ENCODE measurements at regions of chr16 and their contacts with region 1.

Region 1: DNA sequence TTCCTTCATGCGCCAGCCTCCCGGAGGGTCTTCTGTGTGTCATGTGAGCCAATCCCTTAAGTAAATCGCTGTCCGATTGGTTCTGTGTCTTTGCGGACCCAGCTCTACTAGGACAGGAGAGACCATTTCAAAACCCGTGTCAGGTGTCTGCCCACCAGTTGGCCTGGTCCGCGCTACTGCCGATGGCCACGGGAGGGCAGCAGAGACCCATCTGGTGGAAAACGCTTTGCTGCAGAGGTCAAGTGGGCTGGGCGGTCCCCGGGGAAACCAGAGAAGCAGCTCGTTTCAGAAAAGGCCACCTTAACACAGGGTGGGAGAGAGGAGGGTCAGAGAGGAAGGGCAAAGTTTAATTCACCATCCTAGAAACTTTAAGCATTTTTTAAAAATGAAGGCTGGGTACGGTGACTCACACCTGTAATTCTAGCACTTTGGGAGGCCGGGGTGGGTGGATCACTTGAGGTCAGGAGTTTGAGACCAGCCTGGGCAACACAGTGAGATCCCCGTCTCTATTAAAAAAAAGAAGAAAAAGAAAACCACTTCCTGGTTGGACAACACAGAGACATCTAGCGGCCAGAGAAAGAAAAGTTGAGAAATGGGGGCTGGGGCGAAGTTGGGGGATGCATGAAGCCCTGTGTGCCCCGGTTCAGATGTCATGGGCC is 2.8 kb upstream of the CIBAR2 start:
- DNase-seq: peak; percentile 93
- H3K4me3 ChIP-seq: peak overlapping the region in 2 of 4 donors; percentile 27 to 44
- H3K27ac ChIP-seq: peak overlapping the region; percentile 49 to 75 (median 62)
- H3K4me1 ChIP-seq: peaks cover 3 to 8% (median 8%) of the 10 kb centered on the region in 4 donors
- H3K27me3 ChIP-seq: no peaks in the 10 kb centered on the region
- CTCF ChIP-seq: peak; percentile 95 to 98 (median 96)
- EP300 ChIP-seq: no peak
- POLR2A ChIP-seq: no peak

Region 2: DNA sequence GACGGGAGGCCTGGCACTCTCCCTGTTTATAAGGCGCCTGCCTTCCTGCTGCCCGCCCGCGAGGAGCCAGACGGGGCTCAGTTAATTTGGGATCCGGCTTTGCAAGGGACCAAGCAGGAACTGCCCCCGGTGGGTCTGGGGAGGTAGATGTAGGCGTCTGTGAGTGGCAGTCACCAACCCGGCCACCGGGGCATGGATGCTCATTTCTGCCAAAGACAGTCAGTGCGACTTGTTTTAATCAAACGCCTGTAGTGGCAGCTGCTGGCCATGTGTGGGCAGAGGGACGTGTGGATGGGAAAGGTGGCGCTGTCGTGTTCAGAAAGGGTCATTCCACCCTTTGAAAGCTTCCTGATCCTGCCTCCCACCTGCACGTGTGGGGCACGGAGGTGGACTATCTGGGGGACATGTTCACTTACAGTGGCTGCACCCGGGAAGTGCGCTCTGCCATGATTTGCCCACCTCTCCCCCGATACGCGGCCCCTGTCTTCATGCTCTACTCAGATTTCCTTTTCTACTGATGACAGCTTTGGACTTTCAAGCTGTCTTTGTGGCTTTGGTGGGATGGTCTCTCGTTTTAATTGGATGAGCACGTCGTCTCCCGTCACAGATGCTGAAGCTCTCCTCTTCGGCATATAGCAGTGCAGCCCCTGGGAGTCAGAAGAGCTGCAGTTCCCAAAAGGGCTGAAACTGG is 57.6 kb after region 1 on chr16:
- in situ Hi-C with region 1: no loop called
- intact Hi-C with region 1: loop called (anchors 10 kb)
- DNase-seq: no peak
- H3K4me3 ChIP-seq: peak overlapping the region in 3 of 4 donors; percentile 4 to 12 (median 7)
- H3K27ac ChIP-seq: peak overlapping the region; percentile 8 to 74 (median 52)
- H3K4me1 ChIP-seq: peaks cover 16 to 67% (median 43%) of the 10 kb centered on the region in 4 donors
- H3K27me3 ChIP-seq: peaks cover 56% of the 10 kb centered on the region
- CTCF ChIP-seq: peak; percentile 21 to 40 (median 28)
- EP300 ChIP-seq: no peak
- POLR2A ChIP-seq: no peak

Region 3: DNA sequence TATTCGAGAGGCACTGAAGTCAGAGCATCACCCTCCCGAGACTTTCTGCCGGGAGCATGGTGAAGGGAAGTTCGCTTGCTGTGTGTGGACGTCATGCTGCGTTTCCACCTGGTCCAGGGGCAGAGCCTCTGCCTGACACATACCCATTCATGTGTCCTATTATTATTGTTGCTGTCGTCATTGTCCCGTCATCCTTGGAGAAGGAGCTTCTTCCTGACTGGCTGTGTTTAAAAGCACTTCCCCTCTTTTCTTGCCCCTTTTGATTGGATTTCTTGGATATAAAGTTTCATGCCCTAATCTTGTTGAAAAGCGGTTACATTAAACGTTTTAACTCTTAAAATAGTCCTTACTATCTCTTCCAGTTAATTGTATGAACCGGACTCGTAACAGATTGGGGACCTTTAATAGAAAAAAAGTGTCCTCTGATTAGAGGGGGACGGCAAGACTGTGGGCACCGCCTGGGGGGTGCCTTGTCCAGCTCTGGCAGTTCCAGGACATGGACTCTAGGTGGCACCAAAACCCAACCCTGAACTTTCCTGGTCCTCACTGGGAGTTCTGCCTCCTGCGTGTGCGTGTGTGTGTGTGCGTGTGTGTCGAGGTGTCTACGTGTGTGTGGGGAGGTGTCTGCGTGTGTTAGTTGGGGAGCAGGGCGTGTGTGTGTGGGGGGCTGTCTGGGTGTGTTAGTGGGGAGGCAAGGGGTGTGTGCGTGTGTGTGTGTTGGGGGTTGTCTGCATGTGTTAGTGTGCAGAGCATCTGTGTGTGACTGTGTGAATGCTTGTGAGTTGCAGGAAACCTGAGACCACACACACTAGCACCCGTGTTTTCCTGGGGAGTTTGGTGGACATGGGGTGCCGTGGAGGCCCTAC is 130.5 kb after region 1 on chr16:
- in situ Hi-C with region 1: no loop called
- intact Hi-C with region 1: loop called (anchors 5 kb)
- DNase-seq: peak; percentile 53
- H3K4me3 ChIP-seq: no peak overlapping the region
- H3K27ac ChIP-seq: no peak overlapping the region
- H3K4me1 ChIP-seq: no peaks in the 10 kb centered on the region
- H3K27me3 ChIP-seq: no peaks in the 10 kb centered on the region
- CTCF ChIP-seq: peak; percentile 76 to 85 (median 78)
- EP300 ChIP-seq: no peak
- POLR2A ChIP-seq: no peak

Region 4: DNA sequence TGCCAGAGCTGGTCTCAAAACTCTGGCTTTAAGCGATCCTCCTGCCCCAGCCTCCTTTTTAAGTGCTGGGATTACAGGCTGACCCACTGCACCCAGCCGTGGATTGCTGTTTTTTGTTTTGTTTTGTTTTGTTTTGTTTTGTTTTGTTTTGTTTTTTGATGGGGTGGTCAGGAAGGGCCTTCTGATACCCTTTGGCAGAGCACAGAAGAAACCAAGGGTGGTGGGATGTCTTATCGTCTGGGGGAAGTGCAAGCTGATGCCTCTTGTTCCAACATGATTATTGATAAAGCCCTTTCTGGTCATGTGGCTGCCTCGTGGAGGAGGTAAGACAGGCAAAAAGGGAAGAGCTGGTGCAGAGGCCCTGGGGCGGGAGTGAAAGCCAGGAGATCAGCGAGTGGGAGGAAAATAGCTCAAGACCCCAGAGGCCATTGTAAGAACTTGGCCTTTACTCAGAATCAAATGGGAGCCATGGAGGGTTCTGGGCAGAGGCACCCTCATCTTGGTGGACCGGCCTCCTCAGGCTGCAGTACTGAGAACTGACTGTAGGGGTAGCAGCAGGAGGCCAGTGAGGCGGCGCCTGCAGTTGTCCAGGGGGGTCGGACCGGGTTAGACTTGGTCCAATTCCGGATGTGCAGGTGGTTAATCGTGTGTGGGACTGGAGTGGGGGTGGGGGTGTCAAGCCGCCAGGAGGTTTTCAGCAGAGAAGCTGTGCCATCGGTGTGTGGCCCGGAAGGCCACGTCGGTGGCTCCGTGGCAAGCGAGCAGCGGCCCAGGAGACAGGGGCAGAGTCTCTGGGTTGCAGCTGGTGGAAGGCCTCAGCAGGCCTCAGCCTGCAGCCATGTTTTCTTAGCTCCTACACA is 413.7 kb after region 1 on chr16:
- in situ Hi-C with region 1: no loop called
- intact Hi-C with region 1: no loop called
- DNase-seq: no peak
- H3K4me3 ChIP-seq: no peak overlapping the region
- H3K27ac ChIP-seq: no peak overlapping the region
- H3K4me1 ChIP-seq: peaks cover 3 to 12% (median 8%) of the 10 kb centered on the region in 4 donors
- H3K27me3 ChIP-seq: no peaks in the 10 kb centered on the region
- CTCF ChIP-seq: peak; percentile 45 to 52 (median 47)
- EP300 ChIP-seq: no peak
- POLR2A ChIP-seq: no peak

Measured in transverse colon (tissue), 4 donors.